Panc1 (cell line): ENCODE measurements at regions of chr1 and their contacts with region 1.

Region 1: GRCh38 chr1:18938008-18938706 is 18.3 kb downstream of the IFFO2 start:
- DNase-seq: no peak
- ATAC-seq: peak; percentile 70
- H3K4me3 ChIP-seq: no peak overlapping the region
- H3K27ac ChIP-seq: peak overlapping the region; percentile 84
- H3K4me1 ChIP-seq: peaks cover 95% of the 10 kb centered on the region
- H3K27me3 ChIP-seq: no peaks in the 10 kb centered on the region
- CTCF ChIP-seq: no peak

Region 2: GRCh38 chr1:18956369-18957135 is 18.4 kb after region 1 on chr1 and contains the start of gene IFFO2:
- CTCF ChIA-PET with region 1: no interaction called
- POLR2A ChIA-PET with region 1: no interaction called
- in situ Hi-C with region 1: no loop called
- intact Hi-C with region 1: no loop called
- DNase-seq: peak; percentile 67
- ATAC-seq: peak; percentile 86
- H3K4me3 ChIP-seq: peak within 1 kb of the TSS; percentile 71 to 85
- H3K27ac ChIP-seq: peak within 1 kb of the TSS; percentile 89
- H3K4me1 ChIP-seq: peaks cover 31% of the 10 kb centered on the region
- H3K27me3 ChIP-seq: no peaks in the 10 kb centered on the region
- CTCF ChIP-seq: no peak
- total RNA-seq, gene IFFO2: 59.4 TPM

Region 3: GRCh38 chr1:19040010-19040680 is 102.0 kb after region 1 on chr1:
- CTCF ChIA-PET with region 1: no interaction called
- POLR2A ChIA-PET with region 1: interaction called, 11 read pairs
- in situ Hi-C with region 1: no loop called
- intact Hi-C with region 1: no loop called
- DNase-seq: no peak
- ATAC-seq: no peak
- H3K4me3 ChIP-seq: no peak overlapping the region
- H3K27ac ChIP-seq: no peak overlapping the region
- H3K4me1 ChIP-seq: no peaks in the 10 kb centered on the region
- H3K27me3 ChIP-seq: no peaks in the 10 kb centered on the region
- CTCF ChIP-seq: no peak

Region 4: GRCh38 chr1:19232526-19232851 is 294.3 kb after region 1 on chr1:
- CTCF ChIA-PET with region 1: no interaction called
- POLR2A ChIA-PET with region 1: no interaction called
- in situ Hi-C with region 1: no loop called
- intact Hi-C with region 1: no loop called
- DNase-seq: no peak
- ATAC-seq: no peak
- H3K4me3 ChIP-seq: no peak overlapping the region
- H3K27ac ChIP-seq: no peak overlapping the region
- H3K4me1 ChIP-seq: no peaks in the 10 kb centered on the region
- H3K27me3 ChIP-seq: no peaks in the 10 kb centered on the region
- CTCF ChIP-seq: no peak; the same call in 1 of the 2 replicates